Ascending aorta (tissue), 2 donors: ENCODE measurements at regions of chr3 and their contacts with region 1.

Region 1: GRCh38 chr3:107846279-107846852 is 244.5 kb downstream of the CD47 start:
- DNase-seq: peak in 1 of 2 donors; percentile 73
- H3K4me3 ChIP-seq: no peak overlapping the region
- H3K27ac ChIP-seq: no peak overlapping the region
- H3K4me1 ChIP-seq: no peaks in the 10 kb centered on the region
- H3K27me3 ChIP-seq: no peaks in the 10 kb centered on the region
- CTCF ChIP-seq: peak; percentile 41 to 66 (median 55)

Region 2: GRCh38 chr3:107794664-107795443 is 51.5 kb before region 1 on chr3:
- intact Hi-C with region 1: loop called (anchors 5 kb)
- DNase-seq: no peak
- H3K4me3 ChIP-seq: no peak overlapping the region
- H3K27ac ChIP-seq: peak overlapping the region; percentile 15 to 67
- H3K4me1 ChIP-seq: peaks cover 6 to 41% of the 10 kb centered on the region in 2 donors
- H3K27me3 ChIP-seq: no peaks in the 10 kb centered on the region
- CTCF ChIP-seq: peak in 2 of 3 experiments; percentile 30 to 36